ENCODE measurements at regions of chr2 and their contacts with region 1.

Region 1: GRCh38 chr2:28552045-28552823 is 56.4 kb downstream of the PLB1 start:
- DNase-seq: no peak
- H3K4me3 ChIP-seq: no peak overlapping the region
- H3K27me3 ChIP-seq: peaks cover 5% of the 10 kb centered on the region
- CTCF ChIP-seq: no peak

Region 2: DNA sequence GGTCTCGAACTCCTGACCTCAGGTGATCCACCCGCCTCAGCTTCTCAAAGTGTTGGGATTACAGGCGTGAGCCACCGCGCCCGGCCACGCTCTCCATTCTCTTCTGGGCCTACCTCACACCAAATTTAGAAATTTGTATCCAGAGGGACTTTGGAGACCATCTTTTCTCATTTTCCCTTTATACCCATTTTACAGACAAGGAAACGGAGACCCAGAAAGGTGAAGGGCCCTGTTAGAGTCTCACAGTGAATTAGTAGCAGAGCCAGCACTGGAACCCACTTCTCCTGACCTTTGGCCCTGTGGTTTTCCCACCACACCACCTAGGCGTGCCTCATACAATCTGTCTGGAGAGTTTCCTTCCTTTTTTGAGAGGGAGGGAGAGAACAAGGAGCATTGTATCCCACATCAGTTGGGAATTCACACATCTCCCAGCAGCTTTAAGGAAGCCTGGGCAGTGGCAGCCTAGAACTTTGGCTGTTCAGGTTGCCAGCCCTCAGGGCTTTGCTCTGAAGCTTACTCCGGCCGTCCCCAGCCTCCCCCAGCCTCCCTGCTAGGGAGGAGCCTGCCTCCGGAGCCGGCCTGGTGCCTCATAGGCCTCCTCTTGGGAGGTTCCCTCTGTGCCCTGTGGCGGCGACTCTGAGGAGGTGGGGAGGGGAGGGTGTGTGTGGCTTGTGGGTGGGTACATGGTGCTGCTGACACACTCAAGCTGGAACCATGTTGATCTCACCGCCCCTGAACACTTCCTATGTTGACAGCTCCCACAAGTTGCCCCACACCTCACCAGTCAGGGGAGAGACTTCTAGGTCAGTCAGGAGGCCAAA is 145.7 kb before region 1 on chr2:
- CTCF ChIA-PET with region 1: no interaction called
- POLR2A ChIA-PET with region 1: interaction called, 10 read pairs
- DNase-seq: no peak
- H3K4me3 ChIP-seq: no peak overlapping the region
- H3K27me3 ChIP-seq: no peaks in the 10 kb centered on the region
- CTCF ChIP-seq: no peak

Region 3: DNA sequence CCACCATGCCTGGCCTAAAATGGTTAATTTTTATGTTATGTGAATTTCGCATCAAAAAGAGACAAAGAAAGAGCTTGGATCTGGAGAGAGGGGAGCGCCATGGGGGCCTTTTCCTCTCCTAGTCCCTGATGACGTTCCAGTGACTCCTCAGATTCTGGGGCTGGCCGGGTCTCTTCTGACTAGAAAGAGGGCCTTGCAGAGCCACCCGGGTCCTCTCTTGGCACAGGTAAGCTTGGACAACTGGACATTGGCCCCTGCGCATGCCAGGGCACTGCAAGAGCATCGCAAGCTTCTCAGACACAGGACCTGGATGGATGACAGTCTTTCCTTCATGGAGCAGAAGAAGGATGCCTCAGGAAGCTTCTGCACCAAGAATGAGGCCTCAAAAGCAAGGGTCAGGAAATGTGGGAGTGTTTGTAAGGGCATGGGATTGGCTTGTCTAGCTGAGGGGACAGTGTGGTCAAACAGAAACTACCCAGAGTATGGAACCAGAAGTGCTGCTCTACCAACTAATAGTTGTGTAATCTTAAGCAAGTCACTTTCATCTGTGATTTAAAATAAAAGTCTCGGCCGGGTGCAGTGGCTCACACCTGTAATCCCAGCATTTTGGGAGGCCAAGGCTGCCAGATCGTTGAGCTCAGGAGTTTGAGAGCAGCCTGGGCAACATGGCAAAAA is 124.4 kb before region 1 on chr2:
- CTCF ChIA-PET with region 1: no interaction called
- POLR2A ChIA-PET with region 1: interaction called, 10 read pairs
- DNase-seq: no peak
- H3K4me3 ChIP-seq: no peak overlapping the region
- H3K27me3 ChIP-seq: no peaks in the 10 kb centered on the region
- CTCF ChIP-seq: no peak

Region 4: GRCh38 chr2:28507806-28508764 is 44.1 kb before region 1 on chr2:
- CTCF ChIA-PET with region 1: no interaction called
- POLR2A ChIA-PET with region 1: no interaction called
- DNase-seq: no peak
- H3K4me3 ChIP-seq: no peak overlapping the region
- H3K27me3 ChIP-seq: peaks cover 8% of the 10 kb centered on the region
- CTCF ChIP-seq: no peak

Region 5: GRCh38 chr2:28676152-28676835 is 124.1 kb after region 1 on chr2:
- CTCF ChIA-PET with region 1: no interaction called
- POLR2A ChIA-PET with region 1: interaction called, 11 read pairs
- DNase-seq: no peak
- H3K4me3 ChIP-seq: no peak overlapping the region
- H3K27me3 ChIP-seq: no peaks in the 10 kb centered on the region
- CTCF ChIP-seq: no peak

Measured in BJ (cell line).